ENCODE measurements at regions of chr7 and their contacts with region 1.

Region 1: DNA sequence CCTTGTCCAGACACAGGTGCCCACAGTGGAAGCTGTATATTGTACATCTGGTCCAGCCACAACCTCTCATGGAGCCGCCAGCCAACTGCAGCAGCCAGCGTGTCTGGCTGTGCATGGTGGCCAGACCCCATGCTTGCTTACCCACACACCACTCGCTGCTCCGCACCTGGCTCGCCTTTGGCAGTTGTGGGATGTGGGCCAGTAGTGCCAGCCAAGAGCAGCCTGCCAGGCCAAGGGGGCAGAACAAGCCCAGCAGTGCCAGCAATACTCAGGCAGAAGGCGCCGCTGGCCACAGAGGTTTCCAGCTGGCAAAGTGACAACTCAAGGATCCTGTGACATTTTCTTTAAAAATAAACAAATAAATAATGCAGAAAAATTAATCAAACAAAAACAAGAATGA is 11.7 kb upstream of the TMEM243 start:
- DNase-seq: no peak
- ATAC-seq: no peak
- H3K4me3 ChIP-seq: no peak overlapping the region
- H3K27ac ChIP-seq: no peak overlapping the region
- H3K4me1 ChIP-seq: no peaks in the 10 kb centered on the region
- CTCF ChIP-seq: no peak
- EP300 ChIP-seq: no peak
- POLR2A ChIP-seq: no peak
- RAD21 ChIP-seq: no peak

Region 2: GRCh38 chr7:87209295-87209924 is 21.8 kb before region 1 on chr7:
- CTCF ChIA-PET with region 1: no interaction called
- POLR2A ChIA-PET with region 1: no interaction called
- DNase-seq: no peak
- ATAC-seq: no peak
- H3K4me3 ChIP-seq: no peak overlapping the region
- H3K27ac ChIP-seq: no peak overlapping the region
- H3K4me1 ChIP-seq: no peaks in the 10 kb centered on the region
- CTCF ChIP-seq: no peak
- EP300 ChIP-seq: no peak
- POLR2A ChIP-seq: no peak
- RAD21 ChIP-seq: no peak

Region 3: DNA sequence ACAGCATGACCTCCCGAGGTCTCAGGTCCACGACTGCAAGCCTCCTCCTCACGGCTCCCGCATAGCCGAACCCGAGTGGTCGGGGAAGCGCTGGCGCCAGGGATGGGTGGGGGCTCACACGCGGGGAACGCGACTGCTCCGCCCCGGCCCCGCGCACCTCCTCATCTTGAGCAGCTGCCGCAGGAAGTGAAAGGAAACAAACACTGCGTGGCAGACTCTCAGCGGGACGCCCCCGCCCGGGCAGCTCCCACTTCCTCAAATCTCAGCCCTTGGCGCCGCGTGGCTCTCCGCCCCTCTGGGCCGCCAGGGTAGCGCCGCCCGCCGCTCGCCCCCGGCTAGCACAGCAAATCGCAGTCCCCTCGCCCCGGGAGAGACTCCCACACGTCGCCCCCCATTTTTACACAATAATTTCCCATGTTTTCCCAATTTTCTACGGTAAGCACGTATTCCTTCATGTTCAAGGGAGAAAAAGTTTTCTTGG is 11.7 kb before region 1 on chr7 and contains the start of gene TMEM243:
- CTCF ChIA-PET with region 1: interaction called, 20 read pairs
- POLR2A ChIA-PET with region 1: no interaction called
- DNase-seq: peak; percentile 51 to 53
- ATAC-seq: peak; percentile 63 to 86
- H3K4me3 ChIP-seq: peak within 1 kb of the TSS; percentile 99
- H3K27ac ChIP-seq: peak within 1 kb of the TSS; percentile 67 to 86
- H3K4me1 ChIP-seq: peaks cover 11% of the 10 kb centered on the region
- CTCF ChIP-seq: no peak
- EP300 ChIP-seq: no peak
- POLR2A ChIP-seq: peak; percentile 32
- RAD21 ChIP-seq: no peak
- polyA plus RNA-seq, gene TMEM243: 35.0 and 36.1 TPM in 2 replicates

Region 4: DNA sequence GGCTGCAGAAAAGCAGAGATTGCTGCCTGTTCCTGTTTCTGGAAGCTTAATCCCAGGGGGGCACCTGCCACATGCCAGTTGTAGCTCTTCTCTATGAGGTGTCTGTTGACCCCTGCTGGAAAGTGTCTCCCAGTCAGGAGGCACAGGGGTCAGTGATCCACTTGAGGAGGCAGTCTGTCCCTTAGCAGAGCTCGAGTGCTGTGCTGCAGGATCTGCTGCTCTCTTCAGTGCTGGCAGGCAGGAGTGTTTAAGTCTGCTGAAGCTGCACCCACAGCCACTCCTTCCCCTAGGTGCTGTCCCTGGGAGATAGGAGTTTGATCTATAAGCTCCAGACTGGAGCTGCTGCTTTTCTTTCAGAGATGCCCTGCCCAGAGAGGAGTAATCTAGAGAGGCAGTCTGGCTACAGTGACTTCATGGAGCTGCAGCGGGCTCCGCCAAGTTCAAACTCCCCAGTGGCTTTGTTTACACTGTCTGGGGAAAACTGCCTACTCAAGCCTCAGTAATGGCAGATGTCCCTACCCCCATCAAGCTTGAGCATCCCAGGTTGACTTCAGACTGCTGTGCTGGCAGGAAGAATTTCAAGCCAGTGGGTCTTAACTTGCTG is 56.6 kb after region 1 on chr7:
- CTCF ChIA-PET with region 1: no interaction called
- POLR2A ChIA-PET with region 1: no interaction called
- DNase-seq: no peak
- ATAC-seq: no peak
- H3K4me3 ChIP-seq: no peak overlapping the region
- H3K27ac ChIP-seq: no peak overlapping the region
- H3K4me1 ChIP-seq: no peaks in the 10 kb centered on the region
- CTCF ChIP-seq: no peak
- EP300 ChIP-seq: no peak
- POLR2A ChIP-seq: no peak
- RAD21 ChIP-seq: no peak

Region 5: GRCh38 chr7:87300756-87301155 is 69.5 kb after region 1 on chr7:
- CTCF ChIA-PET with region 1: no interaction called
- POLR2A ChIA-PET with region 1: no interaction called
- DNase-seq: no peak
- ATAC-seq: no peak
- H3K4me3 ChIP-seq: no peak overlapping the region
- H3K27ac ChIP-seq: no peak overlapping the region
- H3K4me1 ChIP-seq: no peaks in the 10 kb centered on the region
- CTCF ChIP-seq: no peak
- EP300 ChIP-seq: no peak
- POLR2A ChIP-seq: no peak
- RAD21 ChIP-seq: no peak